Heart left ventricle (tissue), 16 donors: ENCODE measurements at regions of chr9 and their contacts with region 1.

Region 1: DNA sequence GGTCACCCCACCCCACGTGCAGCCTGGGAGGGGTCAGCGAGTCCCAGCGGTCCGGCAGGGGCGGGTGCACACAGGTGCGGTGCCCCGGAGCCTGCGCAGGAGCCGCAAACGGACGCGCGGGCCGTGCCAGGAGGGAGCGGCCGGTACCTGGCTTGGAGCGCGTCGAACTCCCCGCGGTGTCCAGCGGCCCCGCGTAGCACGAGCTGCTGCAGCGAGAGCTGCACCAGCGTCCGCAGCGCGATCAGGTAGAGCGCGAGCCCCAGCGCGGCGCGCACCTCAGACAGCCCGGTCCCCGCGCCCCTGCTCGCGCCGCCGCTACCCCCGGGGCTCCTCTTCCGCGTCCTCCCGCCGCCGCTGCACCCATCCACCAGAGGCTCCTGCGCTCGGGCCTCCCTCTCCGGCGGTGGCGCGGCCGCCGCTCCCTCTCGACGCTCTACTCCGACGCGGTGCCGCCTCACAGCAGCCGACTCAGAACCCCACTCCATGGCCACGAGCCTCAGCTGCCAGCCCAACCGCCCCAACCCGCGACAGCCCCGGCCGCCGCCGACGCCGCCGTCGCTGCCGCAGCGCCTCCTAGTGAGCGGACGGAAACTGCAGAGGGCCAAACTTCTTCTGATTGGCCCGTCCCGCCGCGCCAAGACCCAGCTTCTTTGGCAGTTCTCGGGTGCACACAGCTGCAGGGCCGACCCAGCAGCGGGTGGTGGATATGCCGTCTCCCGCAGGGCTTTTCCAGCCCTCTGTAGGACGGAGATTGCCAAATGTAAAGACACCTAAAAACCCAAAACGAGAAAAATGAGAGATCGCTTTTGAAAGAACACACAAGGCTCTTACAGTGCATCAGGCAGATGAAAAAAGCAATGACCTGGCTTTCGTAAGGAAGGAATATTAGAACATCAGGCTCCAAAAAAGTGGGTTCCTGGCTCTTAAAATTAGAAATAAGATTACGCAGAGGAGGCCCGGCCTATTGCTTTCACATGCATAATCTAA is at the start of gene ERMP1:
- DNase-seq: peak; percentile 87 to 93 (median 91)
- ATAC-seq: peak; percentile 85 to 96 (median 94)
- H3K4me3 ChIP-seq: peak within 1 kb of the TSS; percentile 66 to 98 (median 84)
- H3K27ac ChIP-seq: peak within 1 kb of the TSS in 11 of 12 donors; percentile 50 to 84 (median 73)
- H3K4me1 ChIP-seq: peaks cover 0 to 32% (median 18%) of the 10 kb centered on the region in 12 donors
- H3K27me3 ChIP-seq: no peaks in the 10 kb centered on the region
- CTCF ChIP-seq: peak; percentile 79 to 98 (median 89)
- POLR2A ChIP-seq: peak in 1 of 2 donors; percentile 61
- total RNA-seq, gene ERMP1: 10.9 to 28.7 (median 21.9) TPM

Region 2: GRCh38 chr9:5450359-5451091 is 382.3 kb before region 1 on chr9 and contains the start of gene CD274:
- intact Hi-C with region 1: loop called in 1 of 10 experiments (anchors 10 kb)
- DNase-seq: peak; percentile 90 to 95 (median 94)
- ATAC-seq: peak; percentile 96 to 99 (median 98)
- H3K4me3 ChIP-seq: peak within 1 kb of the TSS; percentile 7 to 83 (median 66)
- H3K27ac ChIP-seq: peak within 1 kb of the TSS; percentile 6 to 97 (median 80)
- H3K4me1 ChIP-seq: peaks cover 0 to 85% (median 21%) of the 10 kb centered on the region in 12 donors
- H3K27me3 ChIP-seq: no peaks in the 10 kb centered on the region
- CTCF ChIP-seq: peak; percentile 53 to 88 (median 66)
- POLR2A ChIP-seq: no peak
- total RNA-seq, gene CD274: 11.6 to 54.4 (median 15.7) TPM

Region 3: GRCh38 chr9:6090317-6090716 is 257.5 kb after region 1 on chr9:
- intact Hi-C with region 1: no loop called
- DNase-seq: peak in 4 of 5 donors; percentile 16 to 57 (median 38)
- ATAC-seq: peak; percentile 98 to 100 (median 98)
- H3K4me3 ChIP-seq: no peak overlapping the region
- H3K27ac ChIP-seq: peak overlapping the region in 10 of 12 donors; percentile 19 to 71 (median 60)
- H3K4me1 ChIP-seq: peaks cover 0 to 10% (median 4%) of the 10 kb centered on the region in 12 donors
- H3K27me3 ChIP-seq: no peaks in the 10 kb centered on the region
- CTCF ChIP-seq: no peak
- POLR2A ChIP-seq: no peak